ENCODE measurements at regions of chr11 and their contacts with region 1.

Region 1: GRCh38 chr11:61639816-61640443 is 40.3 kb upstream of the DAGLA start:
- DNase-seq: no peak
- H3K4me3 ChIP-seq: no peak overlapping the region
- H3K4me3 Mint-ChIP-seq: no peak overlapping the region
- H3K27ac ChIP-seq: no peak overlapping the region
- H3K27ac Mint-ChIP-seq: no peak overlapping the region
- H3K4me1 ChIP-seq: no peaks in the 10 kb centered on the region
- H3K4me1 Mint-ChIP-seq: no peaks in the 10 kb centered on the region
- H3K27me3 ChIP-seq: no peaks in the 10 kb centered on the region
- H3K27me3 Mint-ChIP-seq: peaks cover 1 to 13% of the 10 kb centered on the region in 2 donors

Region 2: DNA sequence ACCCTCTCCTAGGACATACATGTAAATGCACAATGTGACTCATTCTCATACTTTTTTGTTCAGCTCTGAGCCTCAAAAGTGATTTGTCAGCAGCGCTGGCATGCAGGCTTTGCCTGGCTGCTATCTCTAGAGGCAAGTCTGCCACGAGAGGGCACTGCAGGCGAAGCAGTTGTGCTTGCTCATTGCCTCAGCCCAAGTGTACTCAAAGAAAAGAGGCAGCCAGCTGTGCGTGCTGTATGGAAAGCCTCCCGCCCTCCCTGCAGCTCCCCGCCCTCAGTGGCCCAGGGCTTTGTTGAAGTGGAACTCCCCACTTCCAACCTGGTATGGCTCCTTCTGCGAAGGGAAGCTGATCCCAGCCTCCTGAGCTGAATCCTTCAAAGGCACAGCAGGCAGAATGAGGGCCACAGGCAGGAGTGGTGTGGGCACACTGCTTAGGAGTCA is 193.7 kb before region 1 on chr11:
- CTCF ChIA-PET with region 1: interaction called, 14 read pairs
- POLR2A ChIA-PET with region 1: no interaction called
- intact Hi-C with region 1: no loop called
- DNase-seq: peak; percentile 33 to 68 (median 50)
- H3K4me3 ChIP-seq: no peak overlapping the region
- H3K4me3 Mint-ChIP-seq: no peak overlapping the region
- H3K27ac ChIP-seq: no peak overlapping the region
- H3K27ac Mint-ChIP-seq: peak overlapping the region in 2 of 7 donors; percentile 61 to 70
- H3K4me1 ChIP-seq: no peaks in the 10 kb centered on the region
- H3K4me1 Mint-ChIP-seq: peaks cover 11 to 18% (median 13%) of the 10 kb centered on the region in 4 donors
- H3K27me3 ChIP-seq: no peaks in the 10 kb centered on the region
- H3K27me3 Mint-ChIP-seq: no peaks in the 10 kb centered on the region

Region 3: GRCh38 chr11:61477727-61478148 is 162.2 kb before region 1 on chr11:
- CTCF ChIA-PET with region 1: interaction called, 32 read pairs
- POLR2A ChIA-PET with region 1: no interaction called
- intact Hi-C with region 1: no loop called
- DNase-seq: peak in 4 of 5 donors; percentile 25 to 48 (median 34)
- H3K4me3 ChIP-seq: no peak overlapping the region
- H3K4me3 Mint-ChIP-seq: no peak overlapping the region
- H3K27ac ChIP-seq: no peak overlapping the region
- H3K27ac Mint-ChIP-seq: no peak overlapping the region
- H3K4me1 ChIP-seq: peaks cover 8% of the 10 kb centered on the region
- H3K4me1 Mint-ChIP-seq: peaks cover 4 to 17% (median 8%) of the 10 kb centered on the region in 4 donors
- H3K27me3 ChIP-seq: no peaks in the 10 kb centered on the region
- H3K27me3 Mint-ChIP-seq: peaks cover 3 to 5% of the 10 kb centered on the region in 2 donors

Region 4: GRCh38 chr11:61627567-61628445 is 12.1 kb before region 1 on chr11:
- CTCF ChIA-PET with region 1: interaction called, 11 read pairs
- POLR2A ChIA-PET with region 1: no interaction called
- intact Hi-C with region 1: no loop called
- DNase-seq: no peak
- H3K4me3 ChIP-seq: no peak overlapping the region
- H3K4me3 Mint-ChIP-seq: no peak overlapping the region
- H3K27ac ChIP-seq: no peak overlapping the region
- H3K27ac Mint-ChIP-seq: no peak overlapping the region
- H3K4me1 ChIP-seq: no peaks in the 10 kb centered on the region
- H3K4me1 Mint-ChIP-seq: peaks cover 0 to 8% (median 0%) of the 10 kb centered on the region in 4 donors
- H3K27me3 ChIP-seq: no peaks in the 10 kb centered on the region
- H3K27me3 Mint-ChIP-seq: peaks cover 4 to 14% of the 10 kb centered on the region in 2 donors

Region 5: GRCh38 chr11:61650781-61651571 is 11.0 kb after region 1 on chr11:
- CTCF ChIA-PET with region 1: interaction called, 23 read pairs
- POLR2A ChIA-PET with region 1: no interaction called
- intact Hi-C with region 1: no loop called
- DNase-seq: no peak
- H3K4me3 ChIP-seq: no peak overlapping the region
- H3K4me3 Mint-ChIP-seq: no peak overlapping the region
- H3K27ac ChIP-seq: no peak overlapping the region
- H3K27ac Mint-ChIP-seq: no peak overlapping the region
- H3K4me1 ChIP-seq: no peaks in the 10 kb centered on the region
- H3K4me1 Mint-ChIP-seq: no peaks in the 10 kb centered on the region
- H3K27me3 ChIP-seq: no peaks in the 10 kb centered on the region
- H3K27me3 Mint-ChIP-seq: peaks cover 14 to 18% of the 10 kb centered on the region in 2 donors

Region 6: GRCh38 chr11:61733120-61733978 is 93.4 kb after region 1 on chr11:
- CTCF ChIA-PET with region 1: interaction called, 17 read pairs
- POLR2A ChIA-PET with region 1: no interaction called
- intact Hi-C with region 1: loop called (anchors 1 kb)
- DNase-seq: peak; percentile 80 to 85 (median 82)
- H3K4me3 ChIP-seq: no peak overlapping the region
- H3K4me3 Mint-ChIP-seq: no peak overlapping the region
- H3K27ac ChIP-seq: no peak overlapping the region
- H3K27ac Mint-ChIP-seq: peak overlapping the region in 4 of 7 donors; percentile 84 to 90 (median 88)
- H3K4me1 ChIP-seq: peaks cover 4% of the 10 kb centered on the region
- H3K4me1 Mint-ChIP-seq: peaks cover 2 to 9% (median 5%) of the 10 kb centered on the region in 4 donors
- H3K27me3 ChIP-seq: no peaks in the 10 kb centered on the region
- H3K27me3 Mint-ChIP-seq: no peaks in the 10 kb centered on the region

Region 7: DNA sequence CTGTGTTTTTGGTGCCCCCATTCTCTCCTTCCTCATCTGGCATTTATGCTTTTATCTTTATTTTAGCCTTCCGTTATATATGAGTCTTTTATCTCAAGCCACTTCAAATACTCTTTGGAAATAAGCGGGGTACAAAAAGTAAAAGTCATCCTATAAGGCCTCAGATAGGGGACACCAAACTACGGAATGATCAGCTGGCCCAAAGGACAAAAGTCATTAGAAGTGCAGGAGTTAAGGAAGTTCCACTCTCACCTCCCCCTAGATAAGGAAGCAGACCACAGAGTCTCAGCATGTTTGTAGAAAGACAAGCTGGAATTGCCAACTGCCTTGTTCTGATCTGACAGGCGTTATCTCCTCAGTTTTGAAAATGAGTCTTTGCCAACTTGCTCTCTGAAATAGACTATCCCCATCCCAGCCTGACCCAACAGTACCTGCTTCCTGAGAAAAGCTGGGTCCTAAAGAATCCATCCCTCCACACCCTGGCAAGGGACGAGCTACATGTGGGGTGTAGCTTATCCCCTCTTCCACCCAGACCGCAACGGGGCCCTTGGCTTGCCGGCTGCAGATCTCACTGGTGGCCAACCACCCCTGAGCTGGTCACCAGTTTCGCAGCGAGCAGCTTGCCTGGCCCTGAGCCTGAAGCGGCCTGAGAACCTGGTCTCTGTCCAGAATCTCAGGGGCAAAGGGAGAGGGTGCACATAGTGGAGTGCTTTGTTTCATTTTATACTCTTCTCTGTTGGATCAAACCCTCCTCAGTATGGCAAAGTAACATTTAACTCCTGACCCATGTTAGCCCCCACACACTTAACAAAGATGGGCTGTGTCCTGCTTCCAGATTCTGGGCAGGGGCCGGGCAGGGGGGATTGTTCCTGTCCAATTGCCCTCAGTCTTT is 202.0 kb after region 1 on chr11:
- CTCF ChIA-PET with region 1: no interaction called
- POLR2A ChIA-PET with region 1: no interaction called
- intact Hi-C with region 1: no loop called
- DNase-seq: no peak
- H3K4me3 ChIP-seq: no peak overlapping the region
- H3K4me3 Mint-ChIP-seq: no peak overlapping the region
- H3K27ac ChIP-seq: no peak overlapping the region
- H3K27ac Mint-ChIP-seq: no peak overlapping the region
- H3K4me1 ChIP-seq: no peaks in the 10 kb centered on the region
- H3K4me1 Mint-ChIP-seq: no peaks in the 10 kb centered on the region
- H3K27me3 ChIP-seq: no peaks in the 10 kb centered on the region
- H3K27me3 Mint-ChIP-seq: no peaks in the 10 kb centered on the region

Measured in CD4-positive, alpha-beta memory T cell (primary cell).